CD8-positive, alpha-beta T cell (primary cell): ENCODE measurements at regions of chr15 and their contacts with region 1.

Region 1: DNA sequence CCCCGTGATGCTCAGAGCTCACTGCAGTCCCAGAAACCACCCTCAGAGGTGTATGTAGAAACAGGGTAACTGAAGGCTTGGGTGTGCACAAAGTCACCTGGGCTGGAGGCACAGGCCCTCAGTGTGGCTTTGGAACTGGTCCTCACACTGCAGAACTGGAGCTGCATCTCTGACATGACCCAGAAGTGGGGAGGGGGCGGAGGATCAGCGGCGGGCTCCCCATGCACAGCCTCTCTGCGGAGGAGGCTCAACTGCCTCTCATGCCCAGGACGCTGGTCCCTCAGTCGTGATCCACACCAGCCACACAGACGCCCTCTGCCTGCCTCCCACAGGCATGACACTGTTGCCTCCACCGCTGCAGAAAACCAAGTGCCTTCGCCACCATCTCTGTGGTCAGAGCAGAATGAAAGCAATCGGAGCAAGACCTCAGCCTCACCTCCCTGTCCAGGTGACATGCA is 73.7 kb downstream of the TM2D3 start:
- DNase-seq: peak in 2 of 9 experiments; percentile 13 to 16
- ATAC-seq: no peak
- H3K4me3 ChIP-seq: no peak overlapping the region
- H3K4me3 Mint-ChIP-seq: no peak overlapping the region
- H3K27ac ChIP-seq: no peak overlapping the region
- H3K27ac Mint-ChIP-seq: no peak overlapping the region
- H3K4me1 ChIP-seq: no peaks in the 10 kb centered on the region
- H3K4me1 Mint-ChIP-seq: no peaks in the 10 kb centered on the region
- H3K27me3 ChIP-seq: peaks cover 0 to 4% of the 10 kb centered on the region in 2 experiments
- H3K27me3 Mint-ChIP-seq: peaks cover 50% of the 10 kb centered on the region
- CTCF ChIP-seq: no peak

Region 2: GRCh38 chr15:101445562-101446517 is 132.6 kb before region 1 on chr15:
- CTCF ChIA-PET with region 1: no interaction called
- POLR2A ChIA-PET with region 1: no interaction called
- intact Hi-C with region 1: no loop called
- DNase-seq: peak in 1 of 9 experiments; percentile 8
- ATAC-seq: no peak
- H3K4me3 ChIP-seq: no peak overlapping the region
- H3K4me3 Mint-ChIP-seq: no peak overlapping the region
- H3K27ac ChIP-seq: no peak overlapping the region
- H3K27ac Mint-ChIP-seq: no peak overlapping the region
- H3K4me1 ChIP-seq: no peaks in the 10 kb centered on the region
- H3K4me1 Mint-ChIP-seq: peaks cover 2% of the 10 kb centered on the region
- H3K27me3 ChIP-seq: no peaks in the 10 kb centered on the region
- H3K27me3 Mint-ChIP-seq: peaks cover 7% of the 10 kb centered on the region
- CTCF ChIP-seq: no peak

Region 3: DNA sequence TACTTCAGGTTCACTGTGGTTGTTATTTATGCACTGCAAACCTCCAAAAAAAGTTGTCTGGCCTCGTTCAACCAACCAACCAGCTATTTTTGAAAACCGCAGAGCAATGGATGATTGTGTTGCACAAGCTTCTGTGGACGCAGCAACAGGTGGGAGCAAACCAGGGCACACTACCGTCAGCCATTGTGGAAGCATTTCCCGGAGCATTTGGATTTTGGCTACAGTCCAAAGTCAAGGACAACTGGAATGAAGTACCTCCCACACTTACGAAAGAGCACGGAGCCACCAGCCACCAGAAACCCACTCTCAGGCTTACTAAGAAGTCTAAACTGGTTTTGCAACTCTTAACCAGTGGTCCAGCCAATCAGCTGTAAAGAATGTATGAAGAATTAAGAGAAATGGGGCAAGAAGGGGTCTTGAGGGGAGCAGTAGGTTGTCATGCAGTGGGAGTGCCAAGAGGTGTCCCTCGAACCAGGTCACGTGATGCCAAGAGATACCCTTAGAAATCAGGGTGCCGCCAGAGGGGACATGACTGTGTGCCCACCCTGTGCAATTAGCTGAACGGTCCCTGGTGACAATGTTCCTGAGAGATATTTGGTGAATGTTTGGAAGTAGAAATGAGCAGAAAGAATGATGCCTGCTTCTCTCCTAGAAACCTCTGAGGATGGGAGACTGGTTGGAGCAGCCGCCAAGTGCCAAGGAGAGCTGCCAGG is 20.1 kb before region 1 on chr15:
- CTCF ChIA-PET with region 1: no interaction called
- POLR2A ChIA-PET with region 1: no interaction called
- intact Hi-C with region 1: no loop called
- DNase-seq: no peak
- ATAC-seq: no peak
- H3K4me3 ChIP-seq: no peak overlapping the region
- H3K4me3 Mint-ChIP-seq: no peak overlapping the region
- H3K27ac ChIP-seq: no peak overlapping the region
- H3K27ac Mint-ChIP-seq: no peak overlapping the region
- H3K4me1 ChIP-seq: no peaks in the 10 kb centered on the region
- H3K4me1 Mint-ChIP-seq: no peaks in the 10 kb centered on the region
- H3K27me3 ChIP-seq: no peaks in the 10 kb centered on the region
- H3K27me3 Mint-ChIP-seq: peaks cover 19% of the 10 kb centered on the region
- CTCF ChIP-seq: no peak

Region 4: DNA sequence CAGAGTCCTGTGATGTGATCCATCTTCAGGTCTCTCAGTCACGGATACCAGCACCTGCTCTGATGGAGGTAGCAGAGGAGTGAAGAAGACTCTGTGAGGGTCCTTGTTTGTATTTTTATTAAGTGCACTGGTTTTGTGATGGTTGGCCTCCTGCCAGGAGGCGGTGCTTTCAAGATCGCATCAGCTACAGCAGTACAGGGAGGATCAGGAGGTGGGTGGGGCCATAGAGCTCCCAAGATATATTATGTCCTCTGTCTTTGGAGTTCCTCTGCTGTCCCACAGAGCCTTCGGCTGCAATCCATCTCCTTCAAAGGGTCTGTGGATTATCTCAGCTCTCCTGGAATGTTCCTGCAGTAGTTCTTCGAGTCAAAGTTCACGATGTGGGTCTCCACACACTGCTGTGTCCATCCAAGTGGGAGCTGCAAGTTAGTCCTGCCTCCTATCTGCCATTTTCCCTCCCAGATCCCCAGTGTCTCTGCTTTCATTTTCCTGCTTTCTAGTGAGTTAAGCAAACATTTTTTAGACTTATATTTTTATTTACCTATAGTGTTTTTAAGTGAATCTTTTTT is 19.0 kb after region 1 on chr15:
- CTCF ChIA-PET with region 1: no interaction called
- POLR2A ChIA-PET with region 1: no interaction called
- intact Hi-C with region 1: loop called in 1 of 2 experiments (anchors 1 kb)
- DNase-seq: no peak
- ATAC-seq: no peak
- H3K4me3 ChIP-seq: no peak overlapping the region
- H3K4me3 Mint-ChIP-seq: no peak overlapping the region
- H3K27ac ChIP-seq: no peak overlapping the region
- H3K27ac Mint-ChIP-seq: no peak overlapping the region
- H3K4me1 ChIP-seq: no peaks in the 10 kb centered on the region
- H3K4me1 Mint-ChIP-seq: no peaks in the 10 kb centered on the region
- H3K27me3 ChIP-seq: peaks cover 0 to 4% of the 10 kb centered on the region in 2 experiments
- H3K27me3 Mint-ChIP-seq: peaks cover 52% of the 10 kb centered on the region
- CTCF ChIP-seq: no peak